ENCODE measurements at regions of chr15 and their contacts with region 1.

Region 1: GRCh38 chr15:52730173-52730572 is 51.0 kb upstream of the ATOSA start:
- DNase-seq: no peak
- H3K4me3 ChIP-seq: no peak overlapping the region
- H3K27ac ChIP-seq: peak overlapping the region in 7 of 8 donors; percentile 31 to 61 (median 49)
- H3K4me1 ChIP-seq: peaks cover 6 to 41% (median 20%) of the 10 kb centered on the region in 6 donors
- H3K27me3 ChIP-seq: no peaks in the 10 kb centered on the region
- CTCF ChIP-seq: peak in 1 of 11 experiments; percentile 7
- POLR2A ChIP-seq: no peak

Region 2: DNA sequence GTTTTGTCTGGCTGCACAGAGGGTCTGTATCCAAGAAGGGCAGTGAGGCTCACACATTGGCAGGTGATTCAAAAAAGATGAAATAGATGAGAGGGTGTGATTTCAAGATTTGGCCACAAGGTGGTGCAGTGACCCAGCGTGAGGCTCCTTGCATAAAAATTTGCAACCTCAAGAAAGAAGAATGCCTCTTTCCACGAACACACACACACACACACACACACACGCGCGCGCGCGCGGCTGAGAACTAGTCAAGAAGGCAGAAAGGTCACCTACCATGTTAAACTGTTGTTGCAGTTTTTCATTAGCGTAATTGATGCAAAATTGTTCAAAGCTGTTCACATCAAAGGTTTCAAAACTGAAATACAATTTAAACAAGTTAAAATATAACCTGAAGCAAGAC is 473.8 kb before region 1 on chr15:
- intact Hi-C with region 1: loop called (anchors 5 kb)
- DNase-seq: peak; percentile 86
- H3K4me3 ChIP-seq: no peak overlapping the region
- H3K27ac ChIP-seq: peak overlapping the region in 1 of 8 donors; percentile 7
- H3K4me1 ChIP-seq: peaks cover under 1 to 31% (median 16%) of the 10 kb centered on the region in 6 donors
- H3K27me3 ChIP-seq: no peaks in the 10 kb centered on the region
- CTCF ChIP-seq: peak; percentile 69 to 85 (median 77)
- POLR2A ChIP-seq: no peak

Region 3: DNA sequence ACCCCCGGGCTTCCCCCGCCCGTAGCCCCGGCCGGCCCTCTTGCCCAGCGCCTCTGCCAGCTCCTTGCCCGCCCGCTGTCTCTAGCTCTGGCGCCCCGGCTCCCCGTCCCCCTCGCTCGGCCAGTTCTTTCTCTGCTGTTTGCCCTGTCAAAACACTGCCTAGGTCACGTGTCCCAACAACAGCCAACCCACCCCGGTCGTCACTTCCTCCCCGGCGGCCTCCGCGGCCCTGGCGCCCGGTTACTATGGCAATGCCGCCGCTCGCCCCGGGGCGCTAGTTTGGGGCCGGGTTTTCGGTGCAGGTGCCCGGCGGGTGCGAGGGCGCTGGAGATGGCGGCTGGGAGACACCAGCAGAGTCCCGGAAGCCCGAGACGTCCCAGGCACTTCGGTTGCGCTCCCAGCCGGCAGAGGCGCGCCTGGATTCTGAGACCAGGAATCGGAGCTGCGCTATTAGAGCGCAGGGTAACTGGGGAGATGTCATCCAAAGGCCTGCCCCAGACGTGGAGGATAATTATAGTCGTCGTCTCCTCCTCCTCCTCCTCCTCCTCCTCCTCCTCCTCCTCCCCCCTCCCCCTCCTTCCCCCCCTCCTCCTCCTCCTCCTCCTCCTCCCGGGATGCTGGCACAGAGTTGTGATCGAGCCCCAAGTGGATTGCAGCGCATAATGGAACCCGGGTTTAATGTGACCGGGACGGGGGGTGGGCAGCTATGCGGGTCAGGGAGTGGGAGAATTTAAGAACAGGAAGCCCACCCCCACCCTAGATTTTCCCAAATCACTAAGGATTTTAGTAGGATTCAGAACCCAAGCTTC is 50.7 kb before region 1 on chr15 and contains the start of gene ATOSA:
- intact Hi-C with region 1: loop called (anchors 5 kb)
- DNase-seq: peak; percentile 99
- H3K4me3 ChIP-seq: peak within 1 kb of the TSS; percentile 56 to 88 (median 84)
- H3K27ac ChIP-seq: peak within 1 kb of the TSS; percentile 95 to 99 (median 99)
- H3K4me1 ChIP-seq: peaks cover 31 to 86% (median 78%) of the 10 kb centered on the region in 6 donors
- H3K27me3 ChIP-seq: no peaks in the 10 kb centered on the region
- CTCF ChIP-seq: peak in 4 of 11 experiments; percentile 7 to 35 (median 26)
- POLR2A ChIP-seq: peak; percentile 36 to 85 (median 76)
- total RNA-seq, gene ATOSA: 65.2 to 148 (median 80.3) TPM

Measured in spleen (tissue), 13 donors.